PC-9 (cell line): ENCODE measurements at regions of chr4 and their contacts with region 1.

Region 1: DNA sequence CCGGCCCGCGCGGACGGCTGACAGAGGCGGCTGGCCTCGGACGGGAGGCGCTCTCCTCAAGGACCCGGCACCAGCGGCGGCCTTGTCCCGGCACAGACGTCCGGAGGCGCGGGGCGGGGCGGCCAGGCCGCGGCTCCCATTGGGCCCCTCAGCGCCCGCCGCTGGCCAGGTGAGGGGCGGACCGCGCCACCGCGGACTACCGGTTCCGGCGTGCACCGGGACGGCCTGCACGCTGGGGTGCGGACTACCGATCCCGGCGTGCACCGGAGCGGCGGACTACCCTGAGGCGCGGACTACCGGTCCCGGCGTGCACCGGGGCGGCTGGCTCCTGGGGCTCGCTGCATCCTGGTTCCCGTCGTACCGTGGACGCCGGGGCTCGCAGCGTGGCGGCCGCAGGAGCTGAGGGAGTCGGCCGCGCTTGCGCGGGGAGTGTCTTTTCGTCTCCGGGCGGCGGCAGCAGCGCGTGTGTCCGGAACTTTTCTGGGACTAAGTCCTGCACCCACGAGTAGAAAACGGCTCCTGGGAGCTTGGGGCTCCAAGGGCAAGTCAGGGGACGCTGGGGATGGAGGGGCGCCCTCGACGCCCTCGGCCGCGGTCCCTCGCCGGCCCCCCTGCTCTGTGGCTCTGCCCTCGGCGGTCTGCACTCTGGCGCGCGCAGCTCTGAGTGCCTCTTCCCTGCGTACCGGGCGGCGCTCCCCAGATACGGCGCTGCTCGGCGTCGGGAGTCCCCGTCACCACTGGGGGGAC is at the start of gene LETM1:
- DNase-seq: peak; percentile 80 to 97
- H3K4me3 ChIP-seq: peak within 1 kb of the TSS; percentile 82
- H3K27ac ChIP-seq: peak within 1 kb of the TSS; percentile 47; the same call in 1 of the 2 replicates
- H3K4me1 ChIP-seq: peaks cover 36% of the 10 kb centered on the region
- H3K27me3 ChIP-seq: no peaks in the 10 kb centered on the region
- CTCF ChIP-seq: no peak
- total RNA-seq, gene LETM1: 44.5 and 58.9 TPM in 2 replicates

Region 2: GRCh38 chr4:1809754-1810511 is 46.3 kb before region 1 on chr4:
- CTCF ChIA-PET with region 1: no interaction called
- POLR2A ChIA-PET with region 1: no interaction called
- intact Hi-C with region 1: no loop called
- DNase-seq: peak; percentile 57 to 84
- H3K4me3 ChIP-seq: no peak overlapping the region
- H3K27ac ChIP-seq: no peak overlapping the region
- H3K4me1 ChIP-seq: no peaks in the 10 kb centered on the region
- H3K27me3 ChIP-seq: no peaks in the 10 kb centered on the region
- CTCF ChIP-seq: peak; percentile 96

Region 3: GRCh38 chr4:1842993-1843448 is 13.2 kb before region 1 on chr4:
- CTCF ChIA-PET with region 1: no interaction called
- POLR2A ChIA-PET with region 1: interaction called, 16 read pairs
- intact Hi-C with region 1: no loop called
- DNase-seq: no peak
- H3K4me3 ChIP-seq: no peak overlapping the region
- H3K27ac ChIP-seq: no peak overlapping the region
- H3K4me1 ChIP-seq: no peaks in the 10 kb centered on the region
- H3K27me3 ChIP-seq: no peaks in the 10 kb centered on the region
- CTCF ChIP-seq: no peak

Region 4: GRCh38 chr4:1870578-1871443 is 14.6 kb after region 1 on chr4 and contains the start of gene NSD2:
- CTCF ChIA-PET with region 1: no interaction called
- POLR2A ChIA-PET with region 1: interaction called, 3 read pairs
- intact Hi-C with region 1: loop called (anchors 1 kb)
- DNase-seq: peak; percentile 51 to 93
- H3K4me3 ChIP-seq: peak within 1 kb of the TSS; percentile 74
- H3K27ac ChIP-seq: peak within 1 kb of the TSS; percentile 79
- H3K4me1 ChIP-seq: peaks cover 33% of the 10 kb centered on the region
- H3K27me3 ChIP-seq: no peaks in the 10 kb centered on the region
- CTCF ChIP-seq: no peak
- total RNA-seq, gene NSD2: 176 and 186 TPM in 2 replicates

Region 5: GRCh38 chr4:2800691-2801596 is 944.7 kb after region 1 on chr4:
- CTCF ChIA-PET with region 1: interaction called, 10 read pairs
- POLR2A ChIA-PET with region 1: no interaction called
- intact Hi-C with region 1: no loop called
- DNase-seq: peak; percentile 51 to 73
- H3K4me3 ChIP-seq: no peak overlapping the region
- H3K27ac ChIP-seq: peak overlapping the region; percentile 51; the same call in 1 of the 2 replicates
- H3K4me1 ChIP-seq: peaks cover 77% of the 10 kb centered on the region
- H3K27me3 ChIP-seq: no peaks in the 10 kb centered on the region
- CTCF ChIP-seq: no peak